PC-9 (cell line): ENCODE measurements at regions of chr2 and their contacts with region 1.

Region 1: DNA sequence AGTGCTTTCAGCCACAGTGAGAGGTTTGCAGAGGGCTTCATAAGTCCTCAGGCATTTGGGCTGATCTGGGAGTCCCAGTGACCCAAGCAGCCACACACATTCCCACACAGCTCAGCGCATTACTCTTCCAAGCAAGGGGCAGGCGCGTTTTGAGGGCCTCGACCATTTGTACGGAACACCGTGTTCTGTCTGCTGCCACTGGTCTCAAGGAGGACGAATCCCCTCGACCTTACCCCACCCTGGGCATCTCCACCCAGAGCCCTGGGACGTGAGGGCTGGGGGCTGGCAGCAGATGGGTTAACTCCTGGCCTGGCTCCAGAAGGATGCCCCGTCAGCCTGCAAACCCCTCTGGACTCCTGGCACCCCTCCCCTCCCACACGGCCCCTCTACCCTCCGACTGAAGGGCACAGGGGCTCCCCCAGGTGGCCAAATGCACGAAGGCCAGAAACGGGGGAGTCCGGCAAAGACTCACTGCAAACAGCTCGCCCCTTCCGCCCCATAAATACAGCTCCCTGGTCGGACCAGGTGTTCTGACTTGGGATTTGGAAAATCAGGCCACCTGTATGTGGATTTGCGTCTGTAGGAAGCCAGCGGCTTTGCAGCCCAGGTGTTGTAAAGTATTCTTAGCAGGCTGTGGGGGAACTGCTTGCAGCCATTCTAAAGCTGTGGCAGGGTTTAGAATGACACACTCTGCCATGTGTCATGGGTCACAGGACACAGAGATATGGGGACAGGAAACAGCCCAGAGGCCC is 33.6 kb upstream of the PTMA start:
- DNase-seq: peak; percentile 48 to 66
- H3K4me3 ChIP-seq: no peak overlapping the region
- H3K27ac ChIP-seq: peak overlapping the region; percentile 34; the same call in 1 of the 2 replicates
- H3K4me1 ChIP-seq: peaks cover 49% of the 10 kb centered on the region
- H3K27me3 ChIP-seq: no peaks in the 10 kb centered on the region
- CTCF ChIP-seq: peak; percentile 86

Region 2: DNA sequence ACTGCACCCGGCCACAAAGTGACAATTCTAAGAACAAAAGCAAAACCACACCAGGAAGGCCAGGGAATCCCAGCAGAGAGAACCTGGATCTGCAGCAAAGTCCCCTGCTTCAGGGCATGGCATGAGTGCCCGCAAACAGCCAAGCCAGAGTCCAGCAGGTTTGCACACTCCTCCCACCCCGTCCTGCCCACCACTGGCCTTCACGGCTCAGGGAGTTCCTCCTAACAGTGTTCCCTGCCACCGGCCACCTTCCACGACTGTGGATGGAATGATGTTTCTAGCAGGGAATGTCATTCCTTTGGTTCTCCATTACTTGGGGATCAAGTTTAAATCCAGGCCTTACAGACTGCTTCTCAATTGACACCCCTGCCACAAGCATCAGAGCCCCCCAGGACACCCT is 321.3 kb before region 1 on chr2:
- CTCF ChIA-PET with region 1: no interaction called
- POLR2A ChIA-PET with region 1: interaction called, 19 read pairs
- intact Hi-C with region 1: no loop called
- DNase-seq: no peak
- H3K4me3 ChIP-seq: no peak overlapping the region
- H3K27ac ChIP-seq: no peak overlapping the region
- H3K4me1 ChIP-seq: peaks cover 17% of the 10 kb centered on the region
- H3K27me3 ChIP-seq: no peaks in the 10 kb centered on the region
- CTCF ChIP-seq: no peak

Region 3: DNA sequence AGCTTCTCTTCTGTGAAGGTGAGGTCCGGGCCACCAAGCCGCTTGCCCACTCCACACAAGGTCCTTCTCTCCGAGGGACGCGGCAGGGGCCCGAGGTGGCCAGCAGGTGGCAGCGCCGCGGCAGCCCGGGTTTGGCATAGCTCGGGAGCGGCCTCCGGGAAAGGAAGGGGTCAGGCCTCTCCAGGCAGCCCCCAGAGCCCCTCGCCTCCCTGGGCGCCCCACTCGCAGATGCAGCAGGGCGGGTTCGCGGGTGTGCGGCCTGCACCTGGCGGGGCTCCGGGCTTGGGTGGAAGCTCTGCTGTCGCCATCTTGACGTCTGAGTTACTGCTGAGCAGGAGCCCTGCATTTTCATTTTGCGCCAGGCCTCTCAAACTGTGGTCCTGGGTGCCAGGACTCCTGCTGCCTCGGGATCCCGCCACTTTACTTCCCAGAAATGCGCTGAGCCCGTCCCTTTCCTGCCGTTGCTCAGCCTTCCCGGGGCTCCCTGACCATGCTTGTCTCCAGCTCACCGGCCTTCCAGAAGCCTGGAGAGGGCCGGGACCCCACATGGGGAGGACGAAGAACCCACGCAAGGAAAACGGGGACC is 191.9 kb before region 1 on chr2:
- CTCF ChIA-PET with region 1: no interaction called
- POLR2A ChIA-PET with region 1: interaction called, 14 read pairs
- intact Hi-C with region 1: no loop called
- DNase-seq: peak in 1 of 2 experiments; percentile 68
- H3K4me3 ChIP-seq: peak overlapping the region; percentile 49; the same call in 1 of the 2 replicates
- H3K27ac ChIP-seq: no peak overlapping the region
- H3K4me1 ChIP-seq: no peaks in the 10 kb centered on the region
- H3K27me3 ChIP-seq: no peaks in the 10 kb centered on the region
- CTCF ChIP-seq: peak; percentile 77

Region 4: GRCh38 chr2:231583982-231584381 is 90.8 kb before region 1 on chr2:
- CTCF ChIA-PET with region 1: interaction called, 13 read pairs
- POLR2A ChIA-PET with region 1: no interaction called
- intact Hi-C with region 1: no loop called
- DNase-seq: no peak
- H3K4me3 ChIP-seq: no peak overlapping the region
- H3K27ac ChIP-seq: no peak overlapping the region
- H3K4me1 ChIP-seq: no peaks in the 10 kb centered on the region
- H3K27me3 ChIP-seq: peaks cover 15% of the 10 kb centered on the region
- CTCF ChIP-seq: no peak

Region 5: GRCh38 chr2:231648587-231649174 is 26.1 kb before region 1 on chr2:
- CTCF ChIA-PET with region 1: interaction called, 9 read pairs
- POLR2A ChIA-PET with region 1: interaction called, 21 read pairs
- intact Hi-C with region 1: loop called (anchors 1 kb)
- DNase-seq: peak; percentile 70 to 89
- H3K4me3 ChIP-seq: no peak overlapping the region
- H3K27ac ChIP-seq: no peak overlapping the region
- H3K4me1 ChIP-seq: peaks cover 35% of the 10 kb centered on the region
- H3K27me3 ChIP-seq: no peaks in the 10 kb centered on the region
- CTCF ChIP-seq: peak; percentile 85

Region 6: GRCh38 chr2:231713730-231714430 is 39.1 kb after region 1 on chr2:
- CTCF ChIA-PET with region 1: interaction called, 32 read pairs
- POLR2A ChIA-PET with region 1: interaction called, 12 read pairs
- intact Hi-C with region 1: loop called (anchors 1 kb)
- DNase-seq: peak; percentile 68 to 91
- H3K4me3 ChIP-seq: no peak overlapping the region
- H3K27ac ChIP-seq: peak overlapping the region; percentile 36; the same call in 1 of the 2 replicates
- H3K4me1 ChIP-seq: peaks cover 30% of the 10 kb centered on the region
- H3K27me3 ChIP-seq: no peaks in the 10 kb centered on the region
- CTCF ChIP-seq: peak; percentile 91